ENCODE measurements at regions of chr16 and their contacts with region 1.

Region 1: GRCh38 chr16:30902029-30902972 is 5.9 kb downstream of the CTF1 start:
- DNase-seq: peak in 1 of 2 donors; percentile 34
- H3K4me3 ChIP-seq: peak overlapping the region; percentile 50 to 76 (median 59)
- H3K27ac ChIP-seq: peak overlapping the region; percentile 79 to 92
- H3K4me1 ChIP-seq: peaks cover 4% of the 10 kb centered on the region in 2 donors
- H3K27me3 ChIP-seq: no peaks in the 10 kb centered on the region
- CTCF ChIP-seq: peak in 1 of 3 donors; percentile 76
- POLR2A ChIP-seq: no peak

Region 2: DNA sequence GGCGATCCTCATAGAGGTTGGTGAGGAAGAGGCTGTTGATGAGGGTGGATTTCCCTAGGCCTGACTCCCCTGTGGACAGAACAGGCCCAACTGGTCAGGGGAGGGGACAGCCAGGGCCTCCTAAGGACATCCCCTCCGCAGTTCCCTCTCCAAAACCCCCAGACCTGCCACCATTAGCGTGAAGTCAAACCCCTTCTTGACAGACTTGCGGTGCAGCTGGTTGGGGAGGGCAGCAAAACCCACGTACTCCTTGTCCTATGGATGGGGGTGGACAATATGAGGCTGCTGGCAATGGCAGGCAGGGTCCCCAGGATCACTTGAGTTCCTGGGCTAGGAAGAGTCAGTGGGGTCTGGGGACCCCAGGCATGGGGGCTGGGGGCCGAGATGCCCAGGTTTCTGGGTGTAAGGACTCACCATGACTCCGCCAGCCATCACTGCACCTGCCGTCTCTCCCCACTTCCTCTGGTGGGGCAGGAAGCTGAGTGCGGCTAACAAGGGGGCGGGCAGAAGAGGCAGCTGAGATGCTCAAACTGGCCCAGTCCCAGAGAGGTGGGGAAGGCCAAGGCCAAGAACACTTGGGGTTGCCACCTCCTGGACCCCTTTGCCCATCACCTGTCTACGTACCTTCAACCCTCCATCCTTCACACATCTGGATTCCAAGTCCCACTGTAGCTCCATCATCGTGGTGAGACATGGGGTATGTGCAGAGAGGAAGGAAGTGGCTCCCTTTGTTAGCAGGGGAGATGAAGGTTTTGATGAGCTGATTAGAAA is 520.0 kb before region 1 on chr16 and contains the start of gene SEPTIN1:
- intact Hi-C with region 1: no loop called
- DNase-seq: no peak
- H3K4me3 ChIP-seq: peak within 1 kb of the TSS in 1 of 3 donors; percentile 19
- H3K27ac ChIP-seq: peak within 1 kb of the TSS in 1 of 2 donors; percentile 38
- H3K4me1 ChIP-seq: peaks cover 0 to 3% of the 10 kb centered on the region in 2 donors
- H3K27me3 ChIP-seq: no peaks in the 10 kb centered on the region
- CTCF ChIP-seq: no peak
- POLR2A ChIP-seq: no peak
- total RNA-seq, gene SEPTIN1: 1.3 to 4.6 (median 2.7) TPM

Region 3: DNA sequence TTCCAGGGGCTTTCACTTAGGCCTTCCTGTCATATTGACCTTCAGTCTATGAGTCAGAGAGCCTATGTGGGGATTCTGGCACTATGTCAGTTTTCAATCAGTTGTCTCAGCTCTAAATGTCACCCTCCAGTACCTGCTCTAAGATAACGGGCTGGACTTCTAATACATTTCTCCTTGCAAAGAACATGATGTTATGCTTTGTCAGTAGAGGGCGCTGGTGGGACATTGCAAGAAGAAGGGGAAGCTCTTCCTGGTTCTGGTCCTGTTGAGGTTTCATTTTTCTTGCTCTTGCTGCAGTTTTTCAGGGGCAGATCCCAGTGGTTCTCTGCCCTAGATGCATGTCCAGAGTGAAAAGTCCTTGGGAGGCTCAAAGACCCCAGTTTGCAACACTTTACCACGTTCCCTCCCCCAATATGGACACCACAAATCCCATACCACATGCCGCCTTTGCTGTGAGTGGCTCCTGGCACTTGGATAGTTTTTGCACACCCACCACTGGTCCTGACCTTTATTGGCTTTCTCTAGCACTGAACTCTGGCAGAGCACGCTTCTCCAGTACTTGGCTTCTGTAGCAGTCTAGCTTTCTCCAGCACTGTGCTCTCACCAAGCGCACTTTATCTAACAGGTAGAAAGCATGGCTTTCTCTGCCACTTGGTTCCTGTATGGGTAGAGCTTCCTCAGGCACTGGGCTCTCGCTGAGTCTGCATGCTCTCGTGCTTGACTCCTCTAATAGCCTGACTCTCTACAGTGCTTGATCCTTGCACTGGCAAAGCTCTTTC is 57.4 kb before region 1 on chr16:
- intact Hi-C with region 1: loop called (anchors 10 kb)
- DNase-seq: peak in 1 of 2 donors; percentile 39
- H3K4me3 ChIP-seq: peak overlapping the region; percentile 14 to 23 (median 21)
- H3K27ac ChIP-seq: no peak overlapping the region
- H3K4me1 ChIP-seq: no peaks in the 10 kb centered on the region
- H3K27me3 ChIP-seq: no peaks in the 10 kb centered on the region
- CTCF ChIP-seq: peak; percentile 72 to 91 (median 79)
- POLR2A ChIP-seq: no peak

Measured in breast epithelium (tissue), 4 donors.